ENCODE measurements at regions of chr1 and their contacts with region 1.

Region 1: GRCh38 chr1:160681067-160681890 is 30.3 kb downstream of the CD48 start:
- DNase-seq: peak; percentile 75 to 92 (median 80)
- ATAC-seq: peak; percentile 100
- H3K4me3 ChIP-seq: no peak overlapping the region
- H3K27ac ChIP-seq: no peak overlapping the region
- H3K4me1 ChIP-seq: peaks cover 0 to 3% of the 10 kb centered on the region in 2 experiments; a peak in 3 of 5 replicates
- H3K27me3 ChIP-seq: no peaks in the 10 kb centered on the region; a peak in 1 of 5 replicates
- CTCF ChIP-seq: peak; percentile 99
- EP300 ChIP-seq: no peak; the same call in 1 of the 2 replicates
- POLR2A ChIP-seq: no peak
- RAD21 ChIP-seq: peak; percentile 91 to 97

Region 2: DNA sequence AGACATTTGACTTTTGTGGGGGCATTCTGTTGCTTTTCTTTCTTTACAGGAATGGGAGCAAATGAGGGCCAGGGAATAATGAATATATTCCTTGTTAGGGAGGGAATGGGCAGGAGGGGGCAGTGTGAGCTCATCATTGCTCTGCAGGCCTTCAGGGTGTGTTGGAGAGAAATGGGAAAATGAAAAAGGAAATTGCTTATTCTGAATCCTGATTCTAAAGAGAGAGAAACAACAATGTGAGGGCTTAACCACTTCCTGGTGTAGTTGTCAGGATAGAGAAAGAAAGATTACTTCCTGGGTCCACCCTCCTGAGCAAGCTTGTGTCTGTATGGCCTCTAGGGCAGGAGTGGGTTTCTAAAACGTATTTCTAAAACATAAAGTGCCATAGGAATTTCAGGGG is 252.6 kb before region 1 on chr1:
- CTCF ChIA-PET with region 1: interaction called, 9 read pairs
- POLR2A ChIA-PET with region 1: no interaction called
- in situ Hi-C with region 1: loop called (anchors 5 kb)
- intact Hi-C with region 1: no loop called
- DNase-seq: peak; percentile 70 to 77 (median 74)
- ATAC-seq: peak; percentile 89
- H3K4me3 ChIP-seq: no peak overlapping the region
- H3K27ac ChIP-seq: no peak overlapping the region; the same call in 2 of the 3 replicates
- H3K4me1 ChIP-seq: peaks cover 4 to 16% of the 10 kb centered on the region in 2 experiments; a peak in 4 of 5 replicates
- H3K27me3 ChIP-seq: no peaks in the 10 kb centered on the region
- CTCF ChIP-seq: peak; percentile 70 to 95 (median 87)
- EP300 ChIP-seq: peak; percentile 38; the same call in 1 of the 2 replicates
- POLR2A ChIP-seq: no peak
- RAD21 ChIP-seq: peak; percentile 99

Region 3: GRCh38 chr1:160653620-160654016 is 27.7 kb before region 1 on chr1:
- CTCF ChIA-PET with region 1: no interaction called
- POLR2A ChIA-PET with region 1: no interaction called
- in situ Hi-C with region 1: no loop called
- intact Hi-C with region 1: no loop called
- DNase-seq: no peak
- ATAC-seq: no peak
- H3K4me3 ChIP-seq: no peak overlapping the region
- H3K27ac ChIP-seq: no peak overlapping the region
- H3K4me1 ChIP-seq: peaks cover 0 to 30% of the 10 kb centered on the region in 2 experiments
- H3K27me3 ChIP-seq: no peaks in the 10 kb centered on the region
- CTCF ChIP-seq: no peak
- EP300 ChIP-seq: no peak
- POLR2A ChIP-seq: no peak
- RAD21 ChIP-seq: no peak

Region 4: GRCh38 chr1:160726498-160727315 is 45.4 kb after region 1 on chr1:
- CTCF ChIA-PET with region 1: no interaction called
- POLR2A ChIA-PET with region 1: interaction called, 3 read pairs
- in situ Hi-C with region 1: no loop called
- intact Hi-C with region 1: loop called (anchors 1 kb)
- DNase-seq: peak; percentile 73 to 86 (median 77)
- ATAC-seq: peak; percentile 93
- H3K4me3 ChIP-seq: no peak overlapping the region
- H3K27ac ChIP-seq: peak overlapping the region; percentile 60
- H3K4me1 ChIP-seq: peaks cover 0 to 8% of the 10 kb centered on the region in 2 experiments; a peak in 2 of 5 replicates
- H3K27me3 ChIP-seq: no peaks in the 10 kb centered on the region; a peak in 1 of 5 replicates
- CTCF ChIP-seq: peak; percentile 85 to 92 (median 88)
- EP300 ChIP-seq: no peak
- POLR2A ChIP-seq: no peak
- RAD21 ChIP-seq: peak; percentile 91 to 96

Region 5: GRCh38 chr1:160768295-160768657 is 87.0 kb after region 1 on chr1:
- CTCF ChIA-PET with region 1: interaction called, 9 read pairs
- POLR2A ChIA-PET with region 1: no interaction called
- in situ Hi-C with region 1: no loop called
- intact Hi-C with region 1: loop called (anchors 1 kb)
- DNase-seq: peak in 3 of 4 experiments; percentile 19 to 64 (median 49)
- ATAC-seq: peak; percentile 96
- H3K4me3 ChIP-seq: no peak overlapping the region
- H3K27ac ChIP-seq: no peak overlapping the region
- H3K4me1 ChIP-seq: peaks cover 0 to 4% of the 10 kb centered on the region in 2 experiments; a peak in 1 of 5 replicates
- H3K27me3 ChIP-seq: peaks cover 0 to 2% of the 10 kb centered on the region in 2 experiments; a peak in 2 of 5 replicates
- CTCF ChIP-seq: peak; percentile 77 to 90 (median 86)
- EP300 ChIP-seq: no peak
- POLR2A ChIP-seq: no peak
- RAD21 ChIP-seq: peak; percentile 90 to 92

Region 6: GRCh38 chr1:160830321-160831153 is 149.3 kb after region 1 on chr1:
- CTCF ChIA-PET with region 1: interaction called, 4 read pairs
- POLR2A ChIA-PET with region 1: interaction called, 3 read pairs
- in situ Hi-C with region 1: no loop called
- intact Hi-C with region 1: loop called (anchors 1 kb)
- DNase-seq: peak; percentile 45 to 72 (median 62)
- ATAC-seq: peak; percentile 95
- H3K4me3 ChIP-seq: no peak overlapping the region
- H3K27ac ChIP-seq: no peak overlapping the region
- H3K4me1 ChIP-seq: no peaks in the 10 kb centered on the region
- H3K27me3 ChIP-seq: peaks cover 0 to 12% of the 10 kb centered on the region in 2 experiments; a peak in 2 of 5 replicates
- CTCF ChIP-seq: peak; percentile 76 to 81 (median 81)
- EP300 ChIP-seq: no peak
- POLR2A ChIP-seq: no peak
- RAD21 ChIP-seq: peak; percentile 73 to 74

Region 7: DNA sequence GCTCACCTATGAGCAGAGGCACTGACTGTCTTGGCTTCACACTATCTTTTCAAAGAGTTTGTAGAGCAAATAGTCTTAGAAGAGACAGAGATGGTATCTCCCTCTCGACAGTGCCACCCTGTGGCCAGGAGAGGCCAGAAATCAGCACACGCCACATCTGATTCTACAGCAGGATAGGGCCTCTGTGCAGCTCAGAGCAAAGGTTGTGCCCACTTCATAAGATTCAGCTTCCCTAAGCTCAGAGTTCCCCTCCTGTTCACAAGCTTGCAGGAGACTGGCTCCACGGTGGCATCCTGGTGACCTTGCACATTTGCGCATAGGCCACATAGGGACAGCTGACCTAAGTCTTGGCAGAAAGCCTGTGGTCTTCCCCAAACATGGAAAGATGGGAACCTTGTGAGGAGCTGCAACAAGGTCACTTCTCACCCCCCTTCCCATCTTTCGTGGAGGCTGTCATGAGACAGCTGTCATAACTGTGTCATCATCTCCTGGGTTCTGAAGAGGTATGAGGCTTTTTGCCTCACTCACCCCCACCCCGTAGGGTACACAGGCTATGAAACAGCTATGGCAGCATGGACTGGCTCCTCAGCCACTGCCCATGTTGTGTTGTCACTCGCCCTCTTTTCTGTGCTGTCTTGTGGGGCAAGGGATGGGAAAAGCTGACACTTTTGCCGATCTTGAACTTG is 270.3 kb after region 1 on chr1:
- CTCF ChIA-PET with region 1: no interaction called
- POLR2A ChIA-PET with region 1: no interaction called
- in situ Hi-C with region 1: no loop called
- intact Hi-C with region 1: loop called (anchors 1 kb)
- DNase-seq: peak; percentile 62 to 70 (median 65)
- ATAC-seq: peak; percentile 90
- H3K4me3 ChIP-seq: no peak overlapping the region
- H3K27ac ChIP-seq: no peak overlapping the region
- H3K4me1 ChIP-seq: peaks cover 0 to 9% of the 10 kb centered on the region in 2 experiments; a peak in 2 of 5 replicates
- H3K27me3 ChIP-seq: peaks cover 10 to 30% of the 10 kb centered on the region in 2 experiments; a peak in 3 of 5 replicates
- CTCF ChIP-seq: peak; percentile 78 to 85 (median 80)
- EP300 ChIP-seq: no peak
- POLR2A ChIP-seq: no peak
- RAD21 ChIP-seq: peak; percentile 78 to 86

Region 8: GRCh38 chr1:160997323-160998038 is 316.2 kb after region 1 on chr1:
- CTCF ChIA-PET with region 1: no interaction called
- POLR2A ChIA-PET with region 1: no interaction called
- in situ Hi-C with region 1: no loop called
- intact Hi-C with region 1: loop called (anchors 5 kb)
- DNase-seq: peak; percentile 67 to 85 (median 76)
- ATAC-seq: peak; percentile 93
- H3K4me3 ChIP-seq: no peak overlapping the region
- H3K27ac ChIP-seq: peak overlapping the region; percentile 52
- H3K4me1 ChIP-seq: peaks cover 7 to 20% of the 10 kb centered on the region in 2 experiments; a peak in 3 of 5 replicates
- H3K27me3 ChIP-seq: no peaks in the 10 kb centered on the region
- CTCF ChIP-seq: peak; percentile 91 to 93 (median 92)
- EP300 ChIP-seq: peak; percentile 29; the same call in 1 of the 2 replicates
- POLR2A ChIP-seq: no peak; the same call in 1 of the 2 replicates
- RAD21 ChIP-seq: peak; percentile 77 to 95

Measured in K562 (cell line).